Panc1 (cell line): ENCODE measurements at regions of chr14 and their contacts with region 1.

Region 1: DNA sequence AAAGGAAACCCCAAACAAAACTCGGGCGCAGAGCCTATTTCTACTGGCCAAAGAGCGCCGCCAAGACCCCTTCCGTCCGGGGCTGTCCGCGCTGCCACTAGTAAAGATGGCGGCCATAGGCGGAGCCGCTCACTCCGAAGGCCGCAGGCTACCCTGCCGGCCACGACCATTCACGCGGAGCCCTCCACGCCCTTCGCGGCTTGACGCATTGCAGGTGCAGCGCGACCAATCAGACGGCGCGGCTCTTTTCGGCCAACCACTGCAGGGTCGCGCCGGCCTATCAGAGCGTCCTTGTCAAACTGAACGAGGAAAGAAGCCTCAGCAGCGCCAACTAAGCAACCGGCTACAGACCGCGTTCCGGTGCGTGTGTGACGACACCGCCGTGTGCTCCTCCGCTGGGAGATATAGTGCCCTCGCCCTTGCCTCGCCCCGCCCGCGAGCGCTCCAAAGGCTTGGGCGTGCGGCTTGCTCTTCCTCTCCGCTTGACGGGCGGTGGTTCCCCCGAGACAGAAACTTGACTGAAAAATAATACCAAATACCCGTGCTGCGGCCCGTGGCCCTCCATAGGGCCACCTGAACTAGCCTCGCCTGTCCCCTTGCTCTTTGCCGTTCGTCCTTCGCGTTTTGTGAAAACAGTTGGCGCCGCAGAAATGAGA is 13.6 kb upstream of the CALM1 start:
- DNase-seq: peak; percentile 89
- ATAC-seq: peak; percentile 98
- H3K4me3 ChIP-seq: peak overlapping the region; percentile 80 to 90
- H3K27ac ChIP-seq: peak overlapping the region; percentile 93
- H3K4me1 ChIP-seq: peaks cover 15% of the 10 kb centered on the region
- H3K27me3 ChIP-seq: no peaks in the 10 kb centered on the region
- CTCF ChIP-seq: no peak

Region 2: GRCh38 chr14:90331497-90332435 is 51.4 kb before region 1 on chr14 and contains the start of gene NRDE2:
- CTCF ChIA-PET with region 1: no interaction called
- POLR2A ChIA-PET with region 1: no interaction called
- in situ Hi-C with region 1: no loop called
- intact Hi-C with region 1: loop called (anchors 5 kb)
- DNase-seq: peak; percentile 64
- ATAC-seq: peak; percentile 99
- H3K4me3 ChIP-seq: peak within 1 kb of the TSS; percentile 64 to 76
- H3K27ac ChIP-seq: peak within 1 kb of the TSS; percentile 94
- H3K4me1 ChIP-seq: no peaks in the 10 kb centered on the region
- H3K27me3 ChIP-seq: no peaks in the 10 kb centered on the region; the same call in 1 of the 2 replicates
- CTCF ChIP-seq: no peak
- total RNA-seq, gene NRDE2: 16.5 TPM

Region 3: DNA sequence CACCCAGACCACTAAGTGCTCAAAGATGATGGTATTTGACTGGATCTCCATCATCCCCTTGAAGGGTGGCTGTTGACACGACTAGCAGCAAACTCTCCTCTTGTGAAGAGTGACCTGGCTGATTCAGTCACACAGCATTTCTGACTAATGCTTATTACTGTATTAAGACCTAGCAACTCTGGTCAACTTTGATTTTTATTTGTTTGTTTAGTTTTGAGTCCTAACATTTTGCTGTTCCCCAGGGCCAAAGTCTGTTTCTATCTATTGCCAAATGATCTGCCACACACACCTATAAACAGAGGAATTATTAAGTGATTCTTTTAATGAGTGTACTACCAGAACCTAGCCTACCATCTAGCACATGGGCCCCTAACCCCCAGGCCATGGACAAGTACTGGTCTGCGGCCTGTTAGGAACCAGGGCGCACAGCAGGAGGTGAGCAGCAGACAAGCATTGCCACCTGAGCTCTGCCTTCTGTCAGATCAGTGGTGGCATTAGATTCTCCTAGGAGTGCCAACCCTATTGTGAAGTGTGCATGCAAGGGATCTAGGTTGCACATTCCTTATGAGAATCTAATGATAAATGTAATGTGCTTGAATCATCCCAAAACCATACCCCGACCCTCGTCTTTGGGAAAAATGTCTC is 557.2 kb after region 1 on chr14:
- CTCF ChIA-PET with region 1: no interaction called
- POLR2A ChIA-PET with region 1: interaction called, 19 read pairs
- in situ Hi-C with region 1: no loop called
- intact Hi-C with region 1: no loop called
- DNase-seq: no peak
- ATAC-seq: no peak
- H3K4me3 ChIP-seq: no peak overlapping the region
- H3K27ac ChIP-seq: no peak overlapping the region
- H3K4me1 ChIP-seq: no peaks in the 10 kb centered on the region
- H3K27me3 ChIP-seq: no peaks in the 10 kb centered on the region
- CTCF ChIP-seq: no peak